Activated naive CD4-positive, alpha-beta T cell treated with anti-CD3 and anti-CD28 coated beads, Interleukin-2, amount 10 ng/mL, durations not matched to agents 7 days and 5 days (primary cell): ENCODE measurements at regions of chr16 and their contacts with region 1.

Region 1: GRCh38 chr16:70251629-70252354 is at the start of gene EXOSC6:
- DNase-seq: peak; percentile 96
- H3K4me3 Mint-ChIP-seq: peak within 1 kb of the TSS; percentile 87
- H3K27ac Mint-ChIP-seq: peak within 1 kb of the TSS; percentile 97
- H3K4me1 Mint-ChIP-seq: peaks cover 25% of the 10 kb centered on the region
- H3K27me3 Mint-ChIP-seq: no peaks in the 10 kb centered on the region

Region 2: DNA sequence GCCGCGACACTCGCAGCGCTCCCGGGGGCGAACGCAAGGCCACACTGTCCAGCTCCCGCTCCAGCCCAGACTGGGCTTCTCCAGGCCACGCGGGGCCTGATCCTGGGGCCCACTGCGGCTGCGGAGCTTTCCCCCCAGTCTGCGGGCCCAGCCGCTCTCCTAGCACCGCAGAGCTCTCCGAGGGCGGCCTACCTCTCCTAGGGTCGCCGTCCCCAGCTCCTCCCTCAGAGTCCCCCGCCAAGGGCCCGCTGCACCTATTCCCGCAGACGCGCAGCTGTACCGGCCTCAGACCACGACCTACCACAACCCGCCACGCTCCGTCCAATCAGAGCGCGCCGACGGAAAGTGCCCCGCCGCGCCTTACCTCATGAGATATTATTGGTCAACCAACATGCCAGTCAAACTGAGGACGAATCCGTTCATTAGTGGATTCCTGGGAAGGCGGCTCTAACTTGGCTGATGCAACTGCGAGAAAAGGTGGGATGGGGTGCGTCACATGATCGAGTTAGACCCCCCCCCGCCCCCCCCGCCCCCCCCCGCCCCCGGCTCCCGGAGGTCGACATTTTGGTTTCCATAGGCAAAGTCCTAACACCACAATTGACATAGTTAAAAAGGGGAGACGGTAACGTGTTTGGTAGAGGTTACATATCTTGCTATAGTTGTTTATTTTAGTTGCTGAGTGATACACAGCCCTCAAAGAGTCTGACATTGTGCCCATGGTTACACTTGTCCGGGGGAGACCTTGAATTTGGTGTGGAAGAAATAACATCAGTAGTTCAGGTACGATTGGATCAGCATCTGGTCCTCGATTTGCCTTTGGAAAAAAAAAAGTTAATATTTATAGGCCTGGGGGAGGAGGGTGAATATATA is 37.7 kb after region 1 on chr16 and contains the start of gene AARS1:
- CTCF ChIA-PET with region 1: interaction called, 15 read pairs
- DNase-seq: peak; percentile 97
- H3K4me3 Mint-ChIP-seq: peak within 1 kb of the TSS; percentile 97
- H3K27ac Mint-ChIP-seq: peak within 1 kb of the TSS; percentile 99
- H3K4me1 Mint-ChIP-seq: peaks cover 40% of the 10 kb centered on the region
- H3K27me3 Mint-ChIP-seq: no peaks in the 10 kb centered on the region

Region 3: GRCh38 chr16:70298988-70299938 is 47.5 kb after region 1 on chr16 and contains the start of gene DDX19B:
- CTCF ChIA-PET with region 1: interaction called, 11 read pairs
- DNase-seq: peak; percentile 82
- H3K4me3 Mint-ChIP-seq: peak within 1 kb of the TSS; percentile 97
- H3K27ac Mint-ChIP-seq: peak within 1 kb of the TSS; percentile 98
- H3K4me1 Mint-ChIP-seq: peaks cover 42% of the 10 kb centered on the region
- H3K27me3 Mint-ChIP-seq: no peaks in the 10 kb centered on the region